SK-N-SH (cell line): ENCODE measurements at regions of chr19 and their contacts with region 1.

Region 1: GRCh38 chr19:506404-507285 is 652 bp upstream of the TPGS1 start:
- DNase-seq: peak; percentile 97
- H3K4me3 ChIP-seq: peak overlapping the region; percentile 96 to 98
- H3K27ac ChIP-seq: peak overlapping the region; percentile 76 to 93
- H3K4me1 ChIP-seq: peaks cover 3 to 13% of the 10 kb centered on the region in 2 experiments; a peak in 1 of 4 replicates
- H3K27me3 ChIP-seq: no peaks in the 10 kb centered on the region
- CTCF ChIP-seq: peak; percentile 95
- EP300 ChIP-seq: no peak
- RAD21 ChIP-seq: peak; percentile 62

Region 2: DNA sequence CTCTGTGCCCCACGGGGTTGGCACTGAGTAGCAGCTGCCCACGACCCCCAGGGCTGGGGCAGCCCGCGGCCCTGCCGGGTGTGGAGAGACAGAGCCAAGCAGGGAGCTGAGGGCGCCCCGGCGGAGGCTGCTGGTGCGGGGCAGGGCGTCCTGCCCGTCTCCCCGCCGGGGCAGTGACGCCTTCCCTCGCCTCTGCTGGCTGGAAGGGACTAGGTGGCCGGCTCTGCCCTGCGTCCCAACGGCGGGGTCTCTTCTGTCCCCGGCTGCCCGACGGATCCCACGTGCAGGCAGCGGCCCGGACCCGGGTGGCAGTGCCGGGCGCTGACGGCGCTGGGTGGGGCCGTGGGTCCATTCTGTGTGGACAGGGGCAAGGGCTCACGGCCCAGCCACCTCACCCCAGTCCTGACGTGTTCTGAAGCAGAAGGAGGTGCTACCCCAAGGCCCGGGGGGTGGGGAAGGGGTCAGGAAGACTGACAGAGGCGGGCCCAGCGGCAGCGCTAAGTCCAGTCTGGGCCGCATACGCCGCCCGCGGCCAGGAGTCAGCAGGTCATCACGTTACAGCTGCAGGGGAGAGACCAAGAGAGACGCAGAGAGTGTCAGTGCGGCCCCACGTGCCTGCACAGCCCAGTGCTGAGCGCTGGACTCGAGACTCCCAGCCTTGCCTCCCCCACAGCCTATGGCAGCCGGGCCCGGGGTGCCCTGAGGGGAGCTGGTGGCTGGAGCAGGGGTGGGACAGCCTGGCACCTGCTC is 200.3 kb before region 1 on chr19:
- CTCF ChIA-PET with region 1: no interaction called
- POLR2A ChIA-PET with region 1: no interaction called
- DNase-seq: peak; percentile 23
- H3K4me3 ChIP-seq: no peak overlapping the region
- H3K27ac ChIP-seq: no peak overlapping the region
- H3K4me1 ChIP-seq: no peaks in the 10 kb centered on the region
- H3K27me3 ChIP-seq: no peaks in the 10 kb centered on the region
- CTCF ChIP-seq: no peak
- EP300 ChIP-seq: no peak
- RAD21 ChIP-seq: no peak

Region 3: GRCh38 chr19:383922-384798 is 122.5 kb before region 1 on chr19:
- CTCF ChIA-PET with region 1: interaction called, 33 read pairs
- POLR2A ChIA-PET with region 1: no interaction called
- DNase-seq: peak; percentile 84
- H3K4me3 ChIP-seq: no peak overlapping the region
- H3K27ac ChIP-seq: no peak overlapping the region
- H3K4me1 ChIP-seq: no peaks in the 10 kb centered on the region
- H3K27me3 ChIP-seq: no peaks in the 10 kb centered on the region
- CTCF ChIP-seq: peak; percentile 23; the same call in 1 of the 2 replicates
- EP300 ChIP-seq: no peak
- RAD21 ChIP-seq: peak; percentile 66

Region 4: DNA sequence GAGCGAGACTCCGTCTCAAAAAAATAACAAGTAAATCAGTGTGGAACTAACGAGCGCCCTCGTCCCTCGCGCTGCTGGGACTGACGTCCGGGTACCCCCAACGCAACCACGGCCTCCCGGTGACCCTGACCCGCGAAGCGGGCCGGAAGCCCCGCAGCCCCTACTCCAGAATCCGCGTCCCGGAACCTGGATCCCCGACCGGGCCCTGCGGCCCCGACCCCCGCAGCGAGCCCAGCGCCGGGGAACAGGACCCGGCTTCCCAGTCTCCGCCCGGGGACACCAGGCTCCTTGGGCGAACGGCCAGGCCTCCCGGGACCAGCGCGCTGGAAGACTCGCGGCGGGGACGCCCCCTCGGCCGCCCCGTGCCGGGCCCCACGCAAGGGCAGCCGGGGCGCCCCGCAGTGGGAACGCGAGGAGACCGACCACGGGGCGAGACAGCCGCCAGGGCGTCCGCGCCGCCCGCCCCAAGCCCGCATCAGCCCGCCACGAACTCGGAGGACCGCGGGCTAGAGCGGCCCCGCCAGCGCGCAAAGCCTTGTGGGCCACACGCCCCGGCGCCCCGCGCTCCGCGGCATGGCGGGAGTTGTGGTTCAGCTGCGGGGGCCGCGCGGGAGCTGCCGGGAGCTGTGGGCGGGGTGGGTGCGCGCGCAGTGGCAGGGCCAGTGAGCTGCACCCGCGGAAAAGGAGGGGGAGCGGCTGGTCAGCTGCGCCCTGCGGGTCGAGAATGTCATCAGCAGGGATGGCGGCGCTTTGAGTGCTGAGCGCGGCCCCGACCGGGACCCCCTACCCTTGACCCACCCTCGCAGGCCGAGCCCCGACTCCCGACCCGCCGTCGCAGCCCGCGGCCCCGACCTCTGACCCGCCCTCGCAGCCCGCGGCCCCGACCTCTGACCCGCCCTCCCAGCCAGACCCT is 17.9 kb before region 1 on chr19:
- CTCF ChIA-PET with region 1: interaction called, 31 read pairs
- POLR2A ChIA-PET with region 1: interaction called, 7 read pairs
- DNase-seq: peak; percentile 99
- H3K4me3 ChIP-seq: peak overlapping the region; percentile 84
- H3K27ac ChIP-seq: peak overlapping the region; percentile 76 to 92
- H3K4me1 ChIP-seq: peaks cover 0 to 7% of the 10 kb centered on the region in 2 experiments; a peak in 1 of 4 replicates
- H3K27me3 ChIP-seq: no peaks in the 10 kb centered on the region
- CTCF ChIP-seq: no peak
- EP300 ChIP-seq: no peak
- RAD21 ChIP-seq: no peak

Region 5: GRCh38 chr19:495402-496186 is 11.1 kb before region 1 on chr19:
- CTCF ChIA-PET with region 1: interaction called, 31 read pairs
- POLR2A ChIA-PET with region 1: no interaction called
- DNase-seq: peak; percentile 84
- H3K4me3 ChIP-seq: peak overlapping the region in 1 of 2 experiments; percentile 49; a peak in 1 of 4 replicates
- H3K27ac ChIP-seq: no peak overlapping the region
- H3K4me1 ChIP-seq: no peaks in the 10 kb centered on the region; a peak in 1 of 4 replicates
- H3K27me3 ChIP-seq: peaks cover 6% of the 10 kb centered on the region; the same call in 1 of the 2 replicates
- CTCF ChIP-seq: peak; percentile 72
- EP300 ChIP-seq: no peak
- RAD21 ChIP-seq: 0 out of 2 replicates have a peak, but pooled peaks have one; percentile 14

Region 6: DNA sequence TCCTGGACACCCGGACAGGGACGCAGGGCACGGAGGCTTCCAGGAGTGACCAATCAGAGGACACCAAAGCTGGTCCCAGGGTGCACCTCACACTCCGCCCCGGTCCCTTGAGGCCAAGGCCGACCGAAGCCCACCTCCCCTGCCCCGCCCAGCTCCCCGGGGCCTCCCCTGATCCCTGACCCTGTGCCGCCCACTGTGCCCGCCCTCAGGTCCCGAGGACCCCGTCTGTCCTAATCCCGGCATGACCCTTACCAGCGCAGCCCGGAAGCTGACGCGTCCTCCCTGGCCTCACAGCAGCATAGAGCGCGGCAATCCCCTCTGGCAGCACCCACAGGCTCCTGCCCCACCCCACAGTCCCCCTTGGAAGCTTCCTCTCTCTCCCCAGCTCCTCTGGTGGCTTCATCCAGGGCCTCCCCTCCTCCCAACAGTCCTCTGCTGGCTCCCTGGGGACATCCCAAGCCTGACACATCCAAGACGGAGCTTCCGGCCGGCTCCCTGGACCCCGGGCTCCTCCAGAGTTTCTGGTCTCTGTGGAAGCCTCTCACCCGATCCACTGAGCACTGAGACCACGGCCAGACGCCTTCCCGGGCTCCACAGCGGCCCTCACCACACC is 17.5 kb after region 1 on chr19:
- CTCF ChIA-PET with region 1: interaction called, 71 read pairs
- POLR2A ChIA-PET with region 1: interaction called, 3 read pairs
- DNase-seq: peak; percentile 75
- H3K4me3 ChIP-seq: peak overlapping the region in 1 of 2 experiments; percentile 31; a peak in 1 of 4 replicates
- H3K27ac ChIP-seq: no peak overlapping the region
- H3K4me1 ChIP-seq: peaks cover 0 to 7% of the 10 kb centered on the region in 2 experiments; a peak in 1 of 4 replicates
- H3K27me3 ChIP-seq: no peaks in the 10 kb centered on the region
- CTCF ChIP-seq: no peak
- EP300 ChIP-seq: no peak
- RAD21 ChIP-seq: no peak

Region 7: DNA sequence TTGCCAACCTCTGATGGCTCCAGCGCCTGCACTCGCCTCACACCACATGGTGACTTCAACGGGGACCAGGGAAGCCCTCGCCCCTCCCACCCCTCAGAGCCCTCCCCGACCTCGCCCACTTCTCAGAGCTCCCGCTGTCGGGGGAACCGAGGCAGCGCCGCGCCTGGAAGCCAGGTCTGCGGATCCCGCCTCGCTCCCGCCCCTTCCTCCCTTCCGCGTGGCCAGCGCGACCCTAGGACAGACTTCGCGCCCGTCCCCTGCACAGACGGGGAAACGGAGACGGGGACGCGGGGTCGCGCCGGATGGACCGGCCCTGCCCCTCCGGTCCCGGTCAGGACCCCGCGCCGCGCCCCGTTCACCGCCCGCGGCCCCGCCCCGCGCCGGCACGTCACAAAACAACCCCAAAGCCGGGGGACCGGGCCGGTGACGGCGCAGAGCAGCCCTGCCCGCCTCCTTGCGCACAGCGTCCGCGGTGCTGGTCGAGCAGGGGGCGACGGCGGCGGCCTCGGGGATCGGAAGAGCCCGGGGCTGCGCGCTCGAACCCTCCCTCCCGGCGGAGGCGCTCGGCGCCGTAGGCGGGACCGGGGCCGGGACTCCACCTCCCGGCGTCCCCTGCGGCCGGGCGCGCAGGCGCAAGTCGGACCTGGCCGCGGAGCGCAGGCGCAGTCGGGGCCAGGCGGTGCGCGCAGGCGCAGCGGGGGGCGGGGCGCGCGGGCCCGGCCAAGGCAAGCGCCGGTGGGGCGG is 24.5 kb after region 1 on chr19:
- CTCF ChIA-PET with region 1: interaction called, 71 read pairs
- POLR2A ChIA-PET with region 1: interaction called, 11 read pairs
- DNase-seq: peak; percentile 99
- H3K4me3 ChIP-seq: peak overlapping the region; percentile 73 to 75
- H3K27ac ChIP-seq: peak overlapping the region; percentile 80 to 95
- H3K4me1 ChIP-seq: peaks cover 11 to 19% of the 10 kb centered on the region in 2 experiments; a peak in 2 of 4 replicates
- H3K27me3 ChIP-seq: no peaks in the 10 kb centered on the region
- CTCF ChIP-seq: no peak
- EP300 ChIP-seq: no peak
- RAD21 ChIP-seq: no peak